Naive thymus-derived CD4-positive, alpha-beta T cell (primary cell): ENCODE measurements at regions of chr1 and their contacts with region 1.

Region 1: GRCh38 chr1:975896-976683 is 5.8 kb downstream of the PERM1 start:
- DNase-seq: peak; percentile 39 to 72 (median 63)
- ATAC-seq: peak; percentile 80
- H3K4me3 ChIP-seq: peak overlapping the region; percentile 44
- H3K4me3 Mint-ChIP-seq: peak overlapping the region in 6 of 10 donors; percentile 9 to 54 (median 21)
- H3K27ac ChIP-seq: no peak overlapping the region
- H3K27ac Mint-ChIP-seq: no peak overlapping the region
- H3K4me1 ChIP-seq: peaks cover 0 to 10% of the 10 kb centered on the region in 2 donors
- H3K4me1 Mint-ChIP-seq: peaks cover 0 to 8% (median 4%) of the 10 kb centered on the region in 7 donors
- H3K27me3 ChIP-seq: peaks cover 0 to 3% of the 10 kb centered on the region in 2 donors
- H3K27me3 Mint-ChIP-seq: peaks cover 0 to 16% (median 9%) of the 10 kb centered on the region in 5 donors

Region 2: GRCh38 chr1:869499-870244 is 106.4 kb before region 1 on chr1:
- CTCF ChIA-PET with region 1: interaction called, 5 read pairs
- POLR2A ChIA-PET with region 1: no interaction called
- intact Hi-C with region 1: loop called in 1 of 2 experiments (anchors 2 kb)
- DNase-seq: peak; percentile 77 to 91 (median 85)
- ATAC-seq: peak; percentile 100
- H3K4me3 ChIP-seq: no peak overlapping the region
- H3K4me3 Mint-ChIP-seq: peak overlapping the region in 5 of 10 donors; percentile 27 to 55 (median 45)
- H3K27ac ChIP-seq: no peak overlapping the region
- H3K27ac Mint-ChIP-seq: no peak overlapping the region
- H3K4me1 ChIP-seq: peaks cover 0 to 4% of the 10 kb centered on the region in 2 donors
- H3K4me1 Mint-ChIP-seq: peaks cover 0 to 10% (median 6%) of the 10 kb centered on the region in 7 donors
- H3K27me3 ChIP-seq: no peaks in the 10 kb centered on the region
- H3K27me3 Mint-ChIP-seq: peaks cover 0 to 27% (median 12%) of the 10 kb centered on the region in 5 donors

Region 3: DNA sequence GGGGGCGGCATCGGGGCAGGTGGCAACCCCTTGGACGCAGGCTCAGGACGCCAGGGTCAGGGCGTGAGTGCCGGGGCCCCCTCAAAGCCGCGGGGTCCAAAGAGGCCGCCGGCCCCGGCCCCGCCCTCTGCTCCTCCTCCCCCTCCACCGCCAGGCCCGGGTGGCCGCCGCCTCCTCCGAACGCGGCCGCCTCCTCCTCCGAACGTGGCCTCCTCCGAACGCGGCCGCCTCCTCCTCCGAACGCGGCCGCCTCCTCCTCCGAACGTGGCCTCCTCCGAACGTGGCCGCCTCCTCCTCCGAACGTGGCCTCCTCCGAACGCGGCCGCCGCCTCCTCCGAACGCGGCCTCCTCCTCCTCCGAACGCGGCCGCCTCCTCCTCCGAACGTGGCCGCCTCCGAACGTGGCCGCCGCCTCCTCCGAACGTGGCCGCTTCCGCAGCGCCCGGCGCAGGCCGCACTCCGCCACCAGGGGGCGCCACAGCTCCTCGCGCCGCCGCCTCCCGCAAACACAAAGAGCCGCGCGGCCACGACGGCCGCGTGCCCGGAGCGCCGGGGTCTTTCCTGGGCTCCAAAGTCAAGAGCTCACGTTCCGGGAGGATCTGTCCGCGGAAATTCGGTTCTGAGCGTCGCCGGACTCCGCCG is 71.7 kb before region 1 on chr1:
- CTCF ChIA-PET with region 1: interaction called, 17 read pairs
- POLR2A ChIA-PET with region 1: no interaction called
- intact Hi-C with region 1: loop called (anchors 1 kb)
- DNase-seq: peak; percentile 77 to 93 (median 89)
- ATAC-seq: peak; percentile 94
- H3K4me3 ChIP-seq: no peak overlapping the region
- H3K4me3 Mint-ChIP-seq: peak overlapping the region in 9 of 10 donors; percentile 53 to 81 (median 71)
- H3K27ac ChIP-seq: no peak overlapping the region
- H3K27ac Mint-ChIP-seq: peak overlapping the region in 2 of 9 donors; percentile 14 to 87
- H3K4me1 ChIP-seq: peaks cover 0 to 8% of the 10 kb centered on the region in 2 donors
- H3K4me1 Mint-ChIP-seq: peaks cover 4 to 14% (median 7%) of the 10 kb centered on the region in 7 donors
- H3K27me3 ChIP-seq: peaks cover 0 to 3% of the 10 kb centered on the region in 2 donors
- H3K27me3 Mint-ChIP-seq: peaks cover 16 to 47% (median 35%) of the 10 kb centered on the region in 5 donors

Region 4: DNA sequence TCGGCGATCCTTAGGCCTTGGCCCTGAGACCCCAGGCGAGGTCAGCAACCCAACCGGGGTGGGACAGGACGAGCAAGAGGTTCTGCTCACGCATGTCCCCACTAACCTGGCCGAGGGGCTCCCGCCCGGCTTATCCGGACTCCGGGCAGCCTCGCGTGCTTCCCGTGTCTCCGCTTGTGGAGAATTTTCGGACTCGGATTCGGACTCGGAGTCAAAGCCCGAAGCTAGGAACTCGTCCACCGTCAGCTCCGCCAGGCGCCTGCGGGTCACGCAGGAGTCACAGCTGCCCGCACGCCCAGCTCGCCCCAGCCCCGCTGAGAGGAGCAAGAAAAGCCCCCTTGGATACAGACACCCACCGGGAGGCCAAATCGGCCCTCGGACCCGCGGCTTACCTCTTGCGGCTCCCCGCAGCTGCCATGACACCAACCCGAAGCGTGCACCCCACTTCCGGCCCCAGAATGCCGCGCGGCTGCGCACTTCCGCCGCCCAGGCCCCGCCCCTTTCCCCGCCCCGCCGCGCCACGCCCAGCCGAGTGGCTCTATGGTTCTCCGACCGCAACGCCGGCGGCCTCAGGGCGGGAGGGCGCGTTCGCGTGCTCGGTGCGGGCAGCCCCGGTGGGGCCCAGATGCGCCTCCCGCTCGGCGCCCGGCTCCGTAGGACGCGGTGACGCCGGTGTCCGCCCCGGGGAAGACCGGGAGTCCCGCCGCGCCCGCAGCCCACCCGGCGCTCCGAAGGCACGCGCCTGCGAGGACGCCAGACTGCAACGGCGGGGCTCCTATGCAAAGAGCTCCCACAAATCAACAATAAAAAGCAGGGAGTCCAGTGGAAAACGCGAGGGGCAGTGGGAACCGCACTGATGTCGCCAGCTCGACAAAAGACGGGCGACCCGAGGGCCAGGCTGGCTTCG is 17.0 kb before region 1 on chr1 and contains the start of gene NOC2L:
- CTCF ChIA-PET with region 1: no interaction called
- POLR2A ChIA-PET with region 1: no interaction called
- intact Hi-C with region 1: loop called in 1 of 2 experiments (anchors 2 kb)
- DNase-seq: peak; percentile 84 to 97 (median 92)
- ATAC-seq: peak; percentile 96
- H3K4me3 ChIP-seq: peak within 1 kb of the TSS; percentile 87
- H3K4me3 Mint-ChIP-seq: peak within 1 kb of the TSS; percentile 83 to 95 (median 90)
- H3K27ac ChIP-seq: peak within 1 kb of the TSS; percentile 89
- H3K27ac Mint-ChIP-seq: peak within 1 kb of the TSS; percentile 48 to 85 (median 77)
- H3K4me1 ChIP-seq: peaks cover 8 to 12% of the 10 kb centered on the region in 2 donors
- H3K4me1 Mint-ChIP-seq: peaks cover 12 to 28% (median 21%) of the 10 kb centered on the region in 7 donors
- H3K27me3 ChIP-seq: no peaks in the 10 kb centered on the region
- H3K27me3 Mint-ChIP-seq: peaks cover 0 to 2% (median 0%) of the 10 kb centered on the region in 5 donors
- total RNA-seq, gene NOC2L: 46.6 to 88.3 (median 67.9) TPM

Region 5: DNA sequence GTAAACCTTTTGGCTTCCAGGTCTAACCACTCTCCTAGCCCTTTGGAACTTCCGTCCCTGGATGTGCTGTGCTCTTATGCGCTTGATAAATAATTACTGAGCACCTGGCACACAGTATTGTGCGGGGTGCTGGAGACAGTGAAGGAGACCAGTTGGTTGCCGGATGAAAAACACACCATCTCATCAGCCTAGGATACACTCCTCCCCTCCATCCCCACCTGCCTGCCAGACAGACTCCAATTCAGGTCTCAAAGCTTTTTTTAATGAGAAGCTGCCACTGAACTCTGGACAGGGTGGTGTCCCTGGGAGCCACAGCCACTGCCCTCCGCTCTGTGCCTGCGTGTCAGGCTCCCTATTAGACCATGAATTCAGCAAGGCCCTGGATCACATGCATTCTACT is 905.6 kb after region 1 on chr1:
- CTCF ChIA-PET with region 1: no interaction called
- POLR2A ChIA-PET with region 1: no interaction called
- intact Hi-C with region 1: no loop called
- DNase-seq: no peak
- ATAC-seq: peak; percentile 22
- H3K4me3 ChIP-seq: no peak overlapping the region
- H3K4me3 Mint-ChIP-seq: peak overlapping the region in 7 of 10 donors; percentile 19 to 73 (median 61)
- H3K27ac ChIP-seq: no peak overlapping the region
- H3K27ac Mint-ChIP-seq: peak overlapping the region in 7 of 9 donors; percentile 13 to 74 (median 39)
- H3K4me1 ChIP-seq: peaks cover 39 to 52% of the 10 kb centered on the region in 2 donors
- H3K4me1 Mint-ChIP-seq: peaks cover 55 to 83% (median 64%) of the 10 kb centered on the region in 7 donors
- H3K27me3 ChIP-seq: no peaks in the 10 kb centered on the region
- H3K27me3 Mint-ChIP-seq: no peaks in the 10 kb centered on the region